Endothelial cell of umbilical vein (primary cell): ENCODE measurements at regions of chr4 and their contacts with region 1.

Region 1: DNA sequence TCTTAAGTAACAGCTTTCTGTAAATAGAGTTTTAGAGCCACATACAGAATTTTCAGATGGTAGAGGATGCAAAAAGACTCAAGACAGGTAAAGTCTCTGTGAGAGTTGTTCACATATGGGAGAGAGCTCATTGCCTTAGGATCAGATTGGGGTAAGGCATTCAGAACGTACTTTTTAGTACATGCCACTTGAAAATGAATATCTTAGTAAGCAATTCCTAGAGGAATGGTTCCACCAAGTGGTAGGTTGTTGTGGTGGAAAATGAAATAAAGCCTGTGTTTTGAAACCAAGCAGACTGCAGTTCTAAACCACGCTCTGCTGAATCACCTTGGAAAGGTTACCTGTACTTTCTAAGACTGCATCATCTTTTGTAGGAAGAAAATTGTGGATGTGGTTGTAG is 547.0 kb upstream of the LCORL start:
- DNase-seq: peak; percentile 78
- H3K4me3 ChIP-seq: no peak overlapping the region
- H3K27ac ChIP-seq: no peak overlapping the region
- H3K4me1 ChIP-seq: peaks cover 24% of the 10 kb centered on the region
- H3K27me3 ChIP-seq: no peaks in the 10 kb centered on the region
- CTCF ChIP-seq: peak in 1 of 2 donors; percentile 30
- POLR2A ChIP-seq: no peak

Region 2: DNA sequence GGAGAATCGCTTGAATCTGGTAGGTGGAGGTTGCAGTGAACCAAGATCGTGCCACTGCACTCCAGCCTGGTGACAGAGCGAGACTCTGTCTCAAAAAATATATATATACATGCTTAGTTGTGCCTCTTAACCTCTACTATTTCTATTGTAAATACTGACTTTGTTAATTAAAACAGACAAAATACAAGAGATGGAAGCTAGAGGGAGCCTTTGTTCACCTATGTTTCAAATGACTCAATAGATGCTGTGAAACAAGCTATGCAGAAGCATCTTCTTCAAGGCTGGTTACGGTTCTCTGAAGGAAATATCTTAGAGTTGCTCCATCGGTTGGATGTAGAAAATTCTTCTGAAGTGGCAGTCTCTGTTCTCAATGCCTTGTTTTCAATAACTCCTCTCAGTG is 751.6 kb before region 1 on chr4:
- CTCF ChIA-PET with region 1: interaction called, 60 read pairs
- POLR2A ChIA-PET with region 1: no interaction called
- dilution Hi-C with region 1: no loop called
- intact Hi-C with region 1: loop called (anchors 1 kb)
- DNase-seq: peak; percentile 75
- H3K4me3 ChIP-seq: no peak overlapping the region
- H3K27ac ChIP-seq: no peak overlapping the region
- H3K4me1 ChIP-seq: peaks cover 23% of the 10 kb centered on the region
- H3K27me3 ChIP-seq: no peaks in the 10 kb centered on the region
- CTCF ChIP-seq: peak; percentile 28 to 33
- POLR2A ChIP-seq: no peak

Region 3: GRCh38 chr4:17934286-17934685 is 634.3 kb before region 1 on chr4:
- CTCF ChIA-PET with region 1: interaction called, 9 read pairs
- POLR2A ChIA-PET with region 1: no interaction called
- dilution Hi-C with region 1: no loop called
- intact Hi-C with region 1: loop called (anchors 2 kb)
- DNase-seq: no peak
- H3K4me3 ChIP-seq: no peak overlapping the region
- H3K27ac ChIP-seq: no peak overlapping the region
- H3K4me1 ChIP-seq: no peaks in the 10 kb centered on the region
- H3K27me3 ChIP-seq: no peaks in the 10 kb centered on the region
- CTCF ChIP-seq: no peak
- POLR2A ChIP-seq: no peak

Region 4: GRCh38 chr4:18536428-18536827 is 32.2 kb before region 1 on chr4:
- CTCF ChIA-PET with region 1: interaction called, 23 read pairs
- POLR2A ChIA-PET with region 1: no interaction called
- dilution Hi-C with region 1: no loop called
- intact Hi-C with region 1: loop called (anchors 1 kb)
- DNase-seq: peak; percentile 32
- H3K4me3 ChIP-seq: no peak overlapping the region
- H3K27ac ChIP-seq: no peak overlapping the region
- H3K4me1 ChIP-seq: peaks cover 45% of the 10 kb centered on the region
- H3K27me3 ChIP-seq: no peaks in the 10 kb centered on the region
- CTCF ChIP-seq: peak; percentile 16 to 37
- POLR2A ChIP-seq: no peak